ENCODE measurements at regions of chr13 and their contacts with region 1.

Region 1: GRCh38 chr13:110455941-110456340 is 105.6 kb downstream of the RAB20 start:
- DNase-seq: peak; percentile 78
- H3K4me3 Mint-ChIP-seq: no peak overlapping the region
- H3K27ac Mint-ChIP-seq: no peak overlapping the region
- H3K4me1 Mint-ChIP-seq: peaks cover 4% of the 10 kb centered on the region
- H3K27me3 Mint-ChIP-seq: peaks cover 20% of the 10 kb centered on the region

Region 2: GRCh38 chr13:110517505-110518225 is 61.7 kb after region 1 on chr13:
- CTCF ChIA-PET with region 1: interaction called, 5 read pairs
- POLR2A ChIA-PET with region 1: no interaction called
- intact Hi-C with region 1: loop called (anchors 5 kb)
- DNase-seq: no peak
- H3K4me3 Mint-ChIP-seq: no peak overlapping the region
- H3K27ac Mint-ChIP-seq: no peak overlapping the region
- H3K4me1 Mint-ChIP-seq: peaks cover 17% of the 10 kb centered on the region
- H3K27me3 Mint-ChIP-seq: peaks cover 3% of the 10 kb centered on the region

Region 3: GRCh38 chr13:110561344-110562035 is 105.5 kb after region 1 on chr13 and contains the start of gene RAB20:
- CTCF ChIA-PET with region 1: interaction called, 5 read pairs
- POLR2A ChIA-PET with region 1: no interaction called
- intact Hi-C with region 1: loop called (anchors 5 kb)
- DNase-seq: peak; percentile 64
- H3K4me3 Mint-ChIP-seq: peak within 1 kb of the TSS; percentile 86
- H3K27ac Mint-ChIP-seq: peak within 1 kb of the TSS; percentile 50
- H3K4me1 Mint-ChIP-seq: peaks cover 18% of the 10 kb centered on the region
- H3K27me3 Mint-ChIP-seq: peaks cover 4% of the 10 kb centered on the region
- total RNA-seq, gene RAB20: 1.4 to 2.1 TPM

Measured in activated CD4-positive, alpha-beta memory T cell treated with anti-CD3 and anti-CD28 coated beads for 36 hours (primary cell).